AG04450 (cell line): ENCODE measurements at regions of chr18 and their contacts with region 1.

Region 1: DNA sequence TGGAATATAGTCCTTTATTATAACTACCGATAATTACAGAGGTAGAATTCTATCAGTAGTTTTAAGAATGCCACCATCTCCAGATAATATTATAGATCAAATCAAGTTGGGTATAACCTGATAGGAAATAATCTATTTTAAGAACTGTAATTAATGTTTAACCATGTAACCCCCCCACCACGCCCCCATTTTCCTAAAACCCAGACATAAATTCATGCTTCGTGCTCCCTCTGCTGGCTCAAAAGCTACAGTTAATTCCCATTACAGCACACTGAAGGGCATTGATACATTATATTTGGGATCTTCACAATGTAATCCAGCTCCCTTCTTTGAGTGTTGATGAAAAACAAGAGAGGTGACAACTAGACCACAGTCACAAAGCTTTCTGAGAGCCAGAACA is 228.0 kb upstream of the SMAD7 start:
- DNase-seq: no peak
- H3K4me3 ChIP-seq: no peak overlapping the region
- H3K27ac ChIP-seq: no peak overlapping the region
- H3K27me3 ChIP-seq: no peaks in the 10 kb centered on the region
- CTCF ChIP-seq: peak; percentile 70

Region 2: DNA sequence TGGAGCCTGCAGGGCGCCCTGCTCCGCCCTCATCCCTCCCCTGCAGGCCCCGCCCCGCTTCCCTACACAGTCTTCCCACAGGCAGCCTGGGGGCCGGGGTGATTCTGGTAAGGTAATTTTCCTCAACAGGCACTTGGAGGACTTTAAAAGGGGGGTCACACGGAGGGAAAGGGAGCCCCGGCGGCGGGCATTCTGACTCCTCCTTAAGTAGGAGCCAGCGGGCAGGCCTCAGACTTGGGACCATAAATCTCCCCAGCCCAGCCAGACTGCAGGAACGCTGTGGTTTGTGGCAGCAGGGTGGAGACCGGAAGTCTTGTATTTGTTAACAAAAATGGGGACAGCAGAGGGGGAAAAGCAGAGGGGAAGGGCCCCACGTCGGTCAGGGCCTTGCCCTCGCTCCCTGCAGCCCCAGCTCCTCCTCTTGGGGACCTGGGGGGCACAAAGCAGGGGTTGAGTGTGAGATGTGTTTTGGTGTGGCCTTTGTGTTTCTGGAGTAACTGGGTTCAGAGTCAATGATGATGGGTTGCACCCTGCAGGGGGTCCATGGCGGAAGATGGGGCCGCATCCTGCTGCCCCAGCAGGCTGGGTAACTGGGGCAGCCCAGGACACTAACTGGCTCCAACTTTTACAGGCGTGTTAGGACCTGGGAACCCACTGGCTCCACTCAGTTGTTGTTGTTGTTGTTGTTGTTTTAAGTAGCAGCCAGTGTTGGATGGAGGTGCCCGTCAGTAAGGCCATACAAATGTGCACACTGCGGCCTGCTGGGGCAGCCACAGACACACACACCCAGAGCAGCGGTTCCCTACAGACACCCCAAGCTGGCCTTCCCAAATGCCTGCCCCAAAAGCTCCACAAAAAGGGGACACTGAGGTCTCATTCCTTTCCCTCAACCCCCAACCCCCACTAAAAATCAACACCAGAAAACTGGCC is 255.7 kb before region 1 on chr18:
- CTCF ChIA-PET with region 1: no interaction called
- POLR2A ChIA-PET with region 1: no interaction called
- DNase-seq: no peak
- H3K4me3 ChIP-seq: peak overlapping the region; percentile 37
- H3K27ac ChIP-seq: peak overlapping the region; percentile 84
- H3K27me3 ChIP-seq: no peaks in the 10 kb centered on the region
- CTCF ChIP-seq: no peak

Region 3: GRCh38 chr18:48990481-48991201 is 188.1 kb before region 1 on chr18:
- CTCF ChIA-PET with region 1: no interaction called
- POLR2A ChIA-PET with region 1: interaction called, 11 read pairs
- DNase-seq: no peak
- H3K4me3 ChIP-seq: no peak overlapping the region
- H3K27ac ChIP-seq: no peak overlapping the region
- H3K27me3 ChIP-seq: no peaks in the 10 kb centered on the region
- CTCF ChIP-seq: no peak